ENCODE measurements at regions of chr6 and their contacts with region 1.

Region 1: GRCh38 chr6:138987640-138988468 is at the start of gene REPS1:
- DNase-seq: peak; percentile 69 to 86
- ATAC-seq: peak; percentile 98
- H3K4me3 ChIP-seq: peak within 1 kb of the TSS; percentile 96
- H3K27ac ChIP-seq: peak within 1 kb of the TSS; percentile 92 to 99
- H3K4me1 ChIP-seq: peaks cover 35% of the 10 kb centered on the region; the same call in 2 of the 3 replicates
- CTCF ChIP-seq: peak; percentile 85
- EP300 ChIP-seq: no peak
- POLR2A ChIP-seq: peak; percentile 41
- RAD21 ChIP-seq: peak; percentile 49 to 68; a peak in 4 of 5 replicates
- polyA plus RNA-seq, gene REPS1: 34.2 and 36.4 TPM in 2 replicates

Region 2: DNA sequence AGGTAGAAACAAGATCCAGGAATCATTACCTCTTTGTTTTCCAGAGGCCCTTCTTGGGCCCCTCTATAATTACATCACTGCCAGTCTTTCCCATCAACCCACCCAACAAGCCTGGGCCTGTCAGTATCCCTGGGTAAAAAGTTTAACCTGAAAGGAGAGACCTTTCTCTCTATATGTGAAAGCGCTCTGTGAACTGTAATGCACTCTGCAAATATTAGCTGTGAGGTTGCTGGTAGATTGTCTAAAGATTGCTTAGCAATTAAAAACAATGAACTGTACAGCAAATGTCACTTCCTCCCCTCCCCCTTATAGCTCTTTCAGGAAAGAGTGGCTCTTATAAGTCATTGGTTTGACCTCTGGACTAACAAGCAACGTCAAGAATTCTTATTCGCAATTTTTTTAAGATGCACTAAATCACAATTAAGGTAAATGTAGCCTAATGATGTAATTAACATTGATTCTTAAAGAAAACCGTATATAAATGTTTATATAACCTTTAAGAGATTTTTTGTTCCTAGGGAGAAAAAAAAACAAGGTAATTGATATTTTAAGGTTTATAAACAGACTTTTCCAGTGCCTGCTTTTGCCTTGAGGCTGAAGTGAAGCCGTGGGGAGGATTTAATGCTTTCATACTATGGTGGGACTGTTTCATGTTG is 173.5 kb before region 1 on chr6:
- CTCF ChIA-PET with region 1: interaction called, 33 read pairs
- POLR2A ChIA-PET with region 1: no interaction called
- DNase-seq: no peak
- ATAC-seq: no peak
- H3K4me3 ChIP-seq: no peak overlapping the region
- H3K27ac ChIP-seq: no peak overlapping the region
- H3K4me1 ChIP-seq: no peaks in the 10 kb centered on the region
- CTCF ChIP-seq: no peak
- EP300 ChIP-seq: no peak
- POLR2A ChIP-seq: no peak
- RAD21 ChIP-seq: no peak

Region 3: GRCh38 chr6:138863321-138863720 is 124.5 kb before region 1 on chr6:
- CTCF ChIA-PET with region 1: no interaction called
- POLR2A ChIA-PET with region 1: no interaction called
- DNase-seq: no peak
- ATAC-seq: no peak
- H3K4me3 ChIP-seq: no peak overlapping the region
- H3K27ac ChIP-seq: no peak overlapping the region
- H3K4me1 ChIP-seq: no peaks in the 10 kb centered on the region
- CTCF ChIP-seq: no peak
- EP300 ChIP-seq: no peak
- POLR2A ChIP-seq: no peak
- RAD21 ChIP-seq: no peak

Region 4: GRCh38 chr6:138977242-138977641 is 10.6 kb before region 1 on chr6:
- CTCF ChIA-PET with region 1: interaction called, 15 read pairs
- POLR2A ChIA-PET with region 1: no interaction called
- DNase-seq: no peak
- ATAC-seq: no peak
- H3K4me3 ChIP-seq: no peak overlapping the region
- H3K27ac ChIP-seq: no peak overlapping the region
- H3K4me1 ChIP-seq: peaks cover 24% of the 10 kb centered on the region
- CTCF ChIP-seq: no peak
- EP300 ChIP-seq: no peak
- POLR2A ChIP-seq: no peak
- RAD21 ChIP-seq: no peak

Measured in A549 (cell line).